Esophagus squamous epithelium (tissue), 5 donors: ENCODE measurements at regions of chr17 and their contacts with region 1.

Region 1: GRCh38 chr17:40782450-40782849 is at the start of gene KRT27:
- DNase-seq: no peak
- H3K4me3 ChIP-seq: no peak within 1 kb of the TSS
- H3K27ac ChIP-seq: no peak within 1 kb of the TSS
- H3K4me1 ChIP-seq: peaks cover 0 to 7% (median 0%) of the 10 kb centered on the region in 3 donors
- H3K27me3 ChIP-seq: peaks cover 0 to 54% (median 0%) of the 10 kb centered on the region in 4 donors
- CTCF ChIP-seq: no peak
- POLR2A ChIP-seq: no peak
- total RNA-seq, gene KRT27: not detected

Region 2: DNA sequence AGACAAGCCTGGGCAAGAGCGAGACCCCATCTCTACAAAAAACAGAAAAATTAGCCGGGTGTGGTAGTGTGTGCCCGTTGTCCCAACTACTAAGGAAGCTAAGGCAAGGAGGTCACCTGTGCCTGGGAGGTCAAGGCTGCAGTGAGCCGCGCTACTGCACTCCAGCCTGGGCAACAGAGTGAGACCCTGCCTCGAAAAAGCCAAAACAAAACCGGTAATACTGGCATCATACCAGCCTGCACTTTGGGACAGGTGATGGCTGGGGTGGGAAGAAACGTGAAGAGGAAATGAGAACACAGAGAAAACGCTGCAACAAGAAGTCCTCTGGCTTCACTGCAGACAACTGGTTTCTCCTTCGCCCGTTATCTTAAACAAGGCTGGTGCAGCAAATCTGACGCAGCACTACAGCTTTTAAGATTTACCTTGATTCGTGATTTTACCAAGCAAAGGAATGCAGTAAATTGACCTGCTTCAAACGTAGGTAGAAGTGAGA is 642.8 kb before region 1 on chr17:
- intact Hi-C with region 1: no loop called
- DNase-seq: no peak
- H3K4me3 ChIP-seq: peak overlapping the region; percentile 59 to 97 (median 80)
- H3K27ac ChIP-seq: peak overlapping the region; percentile 97 to 100 (median 98)
- H3K4me1 ChIP-seq: peaks cover 11 to 37% (median 22%) of the 10 kb centered on the region in 3 donors
- H3K27me3 ChIP-seq: no peaks in the 10 kb centered on the region
- CTCF ChIP-seq: peak in 2 of 6 experiments; percentile 9 to 22
- POLR2A ChIP-seq: no peak

Region 3: DNA sequence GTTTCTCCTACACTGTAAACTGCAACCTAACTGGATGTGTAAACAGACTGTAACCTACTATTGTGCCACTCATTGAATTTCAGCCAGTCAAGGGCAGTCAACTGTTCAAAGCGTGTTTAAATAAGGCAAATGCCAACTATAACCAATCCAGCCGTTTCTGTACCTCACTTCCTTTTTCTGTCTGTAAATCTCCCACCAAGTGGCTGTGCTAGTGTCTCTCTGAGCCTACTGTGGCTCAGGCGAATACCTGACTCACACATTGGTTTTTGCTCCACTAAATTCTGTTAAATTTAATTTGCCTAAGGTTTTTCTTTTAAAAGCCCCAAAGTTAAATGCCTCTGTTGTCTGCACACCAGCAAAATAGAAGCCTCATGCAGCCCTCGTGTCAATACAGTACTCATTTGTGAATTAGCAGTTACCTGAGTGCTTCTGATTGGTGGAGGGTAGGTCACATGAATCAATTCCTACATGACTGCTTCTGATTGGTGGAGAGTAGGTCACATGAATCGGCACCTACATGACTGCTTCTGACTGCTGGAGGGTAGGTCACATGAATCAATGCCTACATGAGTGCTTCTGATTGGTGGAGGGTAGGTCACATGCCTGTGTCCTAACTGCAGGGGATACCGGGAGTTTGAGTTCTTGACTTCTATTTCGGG is 186.1 kb before region 1 on chr17:
- intact Hi-C with region 1: no loop called
- DNase-seq: no peak
- H3K4me3 ChIP-seq: no peak overlapping the region
- H3K27ac ChIP-seq: no peak overlapping the region
- H3K4me1 ChIP-seq: peaks cover 0 to 16% (median 0%) of the 10 kb centered on the region in 3 donors
- H3K27me3 ChIP-seq: no peaks in the 10 kb centered on the region
- CTCF ChIP-seq: no peak
- POLR2A ChIP-seq: no peak

Region 4: DNA sequence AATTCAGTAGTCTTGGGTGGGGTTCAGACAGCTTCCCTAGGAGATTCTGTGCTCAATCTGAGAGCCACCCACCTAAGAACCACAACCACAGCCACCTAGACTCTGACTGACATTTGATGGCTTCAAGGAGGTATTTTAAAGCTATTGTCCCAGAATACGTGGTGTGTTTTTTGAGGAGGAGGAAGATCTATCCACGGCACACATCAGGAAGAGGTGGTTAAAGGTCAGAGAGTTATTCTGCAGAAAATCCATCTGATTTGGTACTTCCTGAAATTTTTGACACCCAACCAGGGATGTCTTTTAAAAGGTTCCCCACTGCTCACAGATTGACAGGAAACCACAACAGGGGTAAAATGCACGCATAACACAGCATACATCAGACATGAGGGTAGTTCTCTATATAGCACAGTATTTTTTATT is 159.9 kb before region 1 on chr17:
- intact Hi-C with region 1: loop called (anchors 10 kb)
- DNase-seq: no peak
- H3K4me3 ChIP-seq: no peak overlapping the region
- H3K27ac ChIP-seq: no peak overlapping the region
- H3K4me1 ChIP-seq: peaks cover 0 to 66% (median 14%) of the 10 kb centered on the region in 3 donors
- H3K27me3 ChIP-seq: peaks cover 0 to 20% (median 0%) of the 10 kb centered on the region in 4 donors
- CTCF ChIP-seq: no peak
- POLR2A ChIP-seq: no peak

Region 5: GRCh38 chr17:40827746-40828453 is 45.5 kb after region 1 on chr17:
- intact Hi-C with region 1: no loop called
- DNase-seq: no peak
- H3K4me3 ChIP-seq: no peak overlapping the region
- H3K27ac ChIP-seq: no peak overlapping the region
- H3K4me1 ChIP-seq: no peaks in the 10 kb centered on the region
- H3K27me3 ChIP-seq: no peaks in the 10 kb centered on the region
- CTCF ChIP-seq: no peak
- POLR2A ChIP-seq: no peak